Calu3 (cell line): ENCODE measurements at regions of chr12 and their contacts with region 1.

Region 1: DNA sequence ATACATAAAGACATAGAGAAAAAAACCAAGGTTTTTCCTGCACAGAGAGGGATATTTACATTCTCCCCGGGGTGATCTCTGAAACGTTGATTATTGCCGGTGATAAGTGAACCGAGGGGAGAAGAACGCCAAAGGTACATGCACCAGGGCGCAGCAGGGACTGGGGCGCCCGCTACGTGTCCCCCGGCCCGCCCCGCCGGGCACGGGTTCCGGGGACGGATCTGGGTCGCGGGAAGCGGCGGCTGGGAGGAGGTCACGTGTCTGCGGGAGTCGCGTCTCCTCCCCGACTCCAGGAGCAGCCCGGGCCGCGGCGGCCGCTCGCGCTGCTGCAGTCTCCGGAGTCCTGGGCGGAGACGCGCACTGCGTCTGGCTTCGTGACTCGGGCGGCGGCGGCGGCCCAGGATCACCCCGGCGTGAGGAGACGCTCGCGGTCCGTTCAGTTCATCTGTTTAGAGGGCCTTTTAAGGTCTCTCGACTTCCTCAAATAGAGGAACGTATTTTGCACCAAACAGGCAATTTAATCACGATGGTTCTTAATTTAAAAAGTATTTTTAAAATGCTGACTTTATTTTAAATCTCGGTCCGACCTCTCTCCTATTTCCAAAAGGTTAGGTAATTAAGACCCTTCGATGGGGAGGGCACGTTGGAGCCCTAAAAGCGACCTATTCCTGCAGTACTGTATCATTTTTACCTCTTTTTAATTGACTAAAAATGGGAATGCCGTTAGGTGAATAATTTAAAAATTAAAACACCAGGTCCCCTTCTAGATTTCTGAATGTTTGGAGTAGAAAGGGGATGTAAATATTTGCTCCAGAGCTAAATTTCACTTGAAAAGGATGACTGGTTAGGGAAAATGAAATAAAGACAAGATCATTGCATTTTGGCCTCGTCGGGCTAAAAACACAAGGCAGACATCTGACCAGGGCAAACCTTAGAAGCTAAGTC is 1.8 kb upstream of the BHLHE41 start:
- DNase-seq: peak; percentile 86
- H3K4me3 Mint-ChIP-seq: peak overlapping the region; percentile 79
- H3K27ac Mint-ChIP-seq: peak overlapping the region; percentile 92
- H3K4me1 Mint-ChIP-seq: peaks cover 21% of the 10 kb centered on the region
- H3K27me3 Mint-ChIP-seq: peaks cover 18% of the 10 kb centered on the region
- CTCF ChIP-seq: no peak

Region 2: DNA sequence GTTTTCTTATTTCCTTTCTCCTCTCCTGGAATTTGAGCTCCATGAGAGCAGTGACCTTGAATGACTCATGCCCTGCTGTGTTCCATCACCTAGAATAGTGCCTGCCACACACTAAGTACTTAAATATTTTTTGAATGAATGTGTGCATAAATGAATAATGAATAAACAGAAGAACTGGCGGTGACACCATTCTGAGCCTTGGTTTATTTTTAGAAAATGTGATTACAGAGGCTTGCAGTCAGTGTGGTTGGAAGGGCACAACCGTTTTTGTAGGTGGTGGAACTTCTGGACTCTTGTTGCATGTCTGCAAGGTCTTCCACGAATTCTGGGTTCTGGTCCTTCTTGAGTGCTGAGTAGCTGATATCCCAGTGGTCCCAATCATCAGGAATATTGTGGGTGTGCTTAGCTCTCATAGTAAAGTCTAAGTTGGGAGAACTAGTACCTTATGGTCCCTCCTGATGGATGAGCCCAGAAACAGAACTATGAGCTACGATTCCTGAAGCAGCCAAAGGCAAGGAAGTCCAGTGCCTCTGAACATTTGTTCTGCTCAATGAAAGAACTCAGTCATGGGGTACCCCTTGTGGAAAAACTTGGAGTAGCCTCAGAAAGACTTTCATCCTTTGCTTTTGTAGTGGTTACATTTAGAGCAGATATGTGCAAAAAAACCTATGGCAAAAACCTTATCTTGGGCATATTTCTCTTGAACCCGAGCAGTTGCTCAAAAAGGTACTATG is 27.0 kb after region 1 on chr12:
- CTCF ChIA-PET with region 1: interaction called, 7 read pairs
- intact Hi-C with region 1: loop called (anchors 2 kb)
- DNase-seq: peak; percentile 49
- H3K4me3 Mint-ChIP-seq: no peak overlapping the region
- H3K27ac Mint-ChIP-seq: peak overlapping the region; percentile 6
- H3K4me1 Mint-ChIP-seq: peaks cover 52% of the 10 kb centered on the region
- H3K27me3 Mint-ChIP-seq: no peaks in the 10 kb centered on the region
- CTCF ChIP-seq: no peak

Region 3: DNA sequence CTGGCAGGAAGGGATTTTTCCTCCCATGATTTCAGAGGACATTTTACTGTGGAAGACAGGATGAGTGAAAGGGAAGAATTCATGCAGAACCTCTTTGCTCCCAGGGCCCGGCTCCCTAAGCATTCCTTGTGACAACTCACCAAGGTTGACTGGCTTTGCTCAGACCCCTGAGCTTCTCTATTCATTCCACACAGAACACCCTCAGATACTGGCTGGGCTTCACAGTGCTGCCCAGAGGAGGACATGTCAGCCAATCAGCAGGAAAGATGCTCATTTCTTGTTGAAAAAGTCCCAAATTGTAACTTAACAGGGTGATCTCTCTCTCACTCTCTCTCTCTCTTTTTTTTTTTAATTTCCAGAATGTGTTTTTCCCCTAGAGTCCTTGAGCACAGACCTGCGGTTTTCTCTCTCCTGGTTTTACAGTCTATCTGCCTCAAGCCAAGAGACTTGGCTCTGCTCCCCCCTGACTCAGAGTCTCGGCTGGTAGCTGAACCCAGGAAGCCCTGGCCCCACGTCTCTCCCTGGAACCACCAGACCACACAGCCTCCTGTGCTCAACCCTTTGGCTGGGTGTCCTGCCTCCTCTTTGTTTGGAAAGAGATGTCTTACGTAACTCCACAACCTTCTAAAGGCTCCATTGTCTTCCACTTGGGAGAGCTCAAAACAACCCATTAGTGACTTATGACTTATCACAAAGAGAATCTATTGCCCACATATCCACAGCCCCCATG is 112.7 kb after region 1 on chr12:
- CTCF ChIA-PET with region 1: interaction called, 4 read pairs
- intact Hi-C with region 1: loop called (anchors 1 kb)
- DNase-seq: peak; percentile 92
- H3K4me3 Mint-ChIP-seq: peak overlapping the region; percentile 24
- H3K27ac Mint-ChIP-seq: peak overlapping the region; percentile 92
- H3K4me1 Mint-ChIP-seq: peaks cover 59% of the 10 kb centered on the region
- H3K27me3 Mint-ChIP-seq: no peaks in the 10 kb centered on the region
- CTCF ChIP-seq: no peak

Region 4: DNA sequence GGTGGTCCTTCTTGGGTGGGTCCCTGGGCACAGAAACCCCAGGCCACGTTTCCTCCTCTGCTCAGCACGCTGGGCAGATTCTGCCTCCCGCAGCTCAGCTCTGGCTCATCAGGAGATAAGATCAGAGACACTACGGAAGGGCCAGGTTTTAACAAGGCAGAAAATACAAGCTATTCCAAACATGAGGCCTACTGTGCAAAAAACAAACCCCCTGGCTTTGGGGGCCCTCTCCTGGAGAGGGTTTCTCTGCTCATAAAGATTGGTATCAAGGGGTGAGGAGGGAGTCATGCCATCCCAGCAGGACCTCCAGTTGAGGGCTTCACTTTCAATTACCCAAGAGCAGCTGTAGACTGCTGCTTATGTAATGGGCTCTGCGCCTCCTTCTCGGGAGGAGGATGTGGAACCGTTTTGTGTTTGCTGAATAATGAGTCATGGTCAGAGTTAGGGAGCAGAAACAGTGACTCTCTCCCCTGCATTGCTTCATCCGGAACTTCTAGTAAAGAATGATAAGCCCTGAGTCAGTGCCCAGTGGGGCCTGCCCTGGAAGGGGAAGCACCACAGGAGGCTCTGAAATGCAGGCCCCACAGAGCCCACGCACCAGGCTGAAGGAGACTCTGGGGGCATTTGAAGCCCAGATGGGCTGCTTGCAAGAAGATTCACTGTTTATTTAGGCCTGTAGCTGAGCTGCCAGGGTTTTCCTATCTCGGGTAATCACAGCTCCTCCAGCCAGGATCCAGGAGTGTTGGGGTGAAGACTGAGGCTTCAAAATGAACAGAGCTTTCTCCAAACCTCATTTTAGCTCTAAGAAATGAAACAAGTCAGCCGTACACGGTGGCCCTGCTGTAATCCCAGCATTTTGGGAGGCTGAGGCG is 148.1 kb after region 1 on chr12:
- CTCF ChIA-PET with region 1: interaction called, 26 read pairs
- intact Hi-C with region 1: loop called (anchors 1 kb)
- DNase-seq: peak; percentile 84
- H3K4me3 Mint-ChIP-seq: peak overlapping the region; percentile 28
- H3K27ac Mint-ChIP-seq: peak overlapping the region; percentile 96
- H3K4me1 Mint-ChIP-seq: peaks cover 51% of the 10 kb centered on the region
- H3K27me3 Mint-ChIP-seq: no peaks in the 10 kb centered on the region
- CTCF ChIP-seq: no peak

Region 5: DNA sequence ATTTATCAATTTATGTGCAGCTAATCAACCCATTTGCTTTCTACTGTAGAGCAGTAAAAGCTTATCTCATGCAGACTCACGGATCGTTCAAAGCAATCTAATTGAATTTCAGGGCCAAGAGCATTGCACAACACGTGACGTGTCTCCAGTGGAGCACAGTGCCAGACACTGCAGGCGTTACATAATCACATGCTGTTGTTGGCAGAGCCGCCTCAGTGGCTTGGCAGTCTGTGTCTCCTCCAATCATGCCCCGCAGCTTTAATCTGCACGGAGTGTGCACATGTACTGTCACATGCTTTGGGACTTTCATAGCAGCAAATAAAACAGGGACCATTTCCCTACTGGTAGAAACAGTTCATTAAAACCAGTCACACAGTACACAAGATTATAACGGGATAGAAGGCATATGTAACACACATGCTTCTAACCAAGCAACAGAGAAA is 397.1 kb after region 1 on chr12:
- CTCF ChIA-PET with region 1: no interaction called
- intact Hi-C with region 1: loop called (anchors 5 kb)
- DNase-seq: peak; percentile 65
- H3K4me3 Mint-ChIP-seq: no peak overlapping the region
- H3K27ac Mint-ChIP-seq: no peak overlapping the region
- H3K4me1 Mint-ChIP-seq: peaks cover 10% of the 10 kb centered on the region
- H3K27me3 Mint-ChIP-seq: peaks cover 6% of the 10 kb centered on the region
- CTCF ChIP-seq: no peak